Esophagus muscularis mucosa (tissue), 4 donors: ENCODE measurements at regions of chr1 and their contacts with region 1.

Region 1: GRCh38 chr1:160251687-160252526 is 10.4 kb downstream of the DCAF8 start:
- DNase-seq: no peak
- H3K4me3 ChIP-seq: no peak overlapping the region
- H3K27ac ChIP-seq: peak overlapping the region; percentile 36 to 57 (median 42)
- H3K4me1 ChIP-seq: peaks cover 29 to 59% (median 51%) of the 10 kb centered on the region in 4 donors
- H3K27me3 ChIP-seq: no peaks in the 10 kb centered on the region
- CTCF ChIP-seq: peak; percentile 70 to 83 (median 70)
- EP300 ChIP-seq: no peak
- POLR2A ChIP-seq: no peak

Region 2: DNA sequence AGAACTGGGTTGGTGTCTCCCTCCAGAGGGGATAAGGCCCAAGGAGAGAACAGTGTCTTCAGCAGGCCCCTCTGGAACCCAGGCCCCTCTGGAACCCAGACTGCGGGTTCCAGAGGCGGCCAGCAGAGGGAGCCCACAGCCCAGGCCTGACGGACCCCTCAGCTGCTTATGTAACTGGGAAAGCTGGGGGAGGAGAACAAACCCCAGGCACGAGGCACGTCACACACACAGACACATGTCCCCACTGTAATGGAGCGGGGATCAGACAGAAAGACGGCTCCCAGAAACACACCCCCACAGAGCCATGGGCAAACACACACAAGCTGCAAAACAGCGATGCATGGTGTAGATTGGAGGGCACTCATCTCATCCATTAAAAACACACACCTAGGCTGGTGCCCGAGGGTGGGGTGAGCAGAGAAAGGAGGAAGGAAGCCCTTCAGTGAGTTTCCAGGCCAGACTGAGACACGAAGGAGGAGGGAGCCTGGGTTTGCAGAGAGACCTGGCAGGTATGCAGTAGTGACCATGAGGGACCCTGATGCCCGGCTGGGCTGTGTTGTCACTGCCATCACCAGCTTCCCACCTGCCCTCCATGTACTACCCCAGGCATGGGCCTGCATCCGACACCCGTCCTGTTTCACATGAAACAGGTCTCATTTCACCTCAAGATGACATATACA is 150.7 kb before region 1 on chr1:
- intact Hi-C with region 1: loop called (anchors 2 kb)
- DNase-seq: no peak
- H3K4me3 ChIP-seq: peak overlapping the region in 1 of 4 donors; percentile 9
- H3K27ac ChIP-seq: peak overlapping the region; percentile 94 to 98 (median 96)
- H3K4me1 ChIP-seq: peaks cover 52 to 76% (median 71%) of the 10 kb centered on the region in 4 donors
- H3K27me3 ChIP-seq: no peaks in the 10 kb centered on the region
- CTCF ChIP-seq: peak in 2 of 3 experiments; percentile 97 to 100
- EP300 ChIP-seq: no peak
- POLR2A ChIP-seq: no peak

Region 3: DNA sequence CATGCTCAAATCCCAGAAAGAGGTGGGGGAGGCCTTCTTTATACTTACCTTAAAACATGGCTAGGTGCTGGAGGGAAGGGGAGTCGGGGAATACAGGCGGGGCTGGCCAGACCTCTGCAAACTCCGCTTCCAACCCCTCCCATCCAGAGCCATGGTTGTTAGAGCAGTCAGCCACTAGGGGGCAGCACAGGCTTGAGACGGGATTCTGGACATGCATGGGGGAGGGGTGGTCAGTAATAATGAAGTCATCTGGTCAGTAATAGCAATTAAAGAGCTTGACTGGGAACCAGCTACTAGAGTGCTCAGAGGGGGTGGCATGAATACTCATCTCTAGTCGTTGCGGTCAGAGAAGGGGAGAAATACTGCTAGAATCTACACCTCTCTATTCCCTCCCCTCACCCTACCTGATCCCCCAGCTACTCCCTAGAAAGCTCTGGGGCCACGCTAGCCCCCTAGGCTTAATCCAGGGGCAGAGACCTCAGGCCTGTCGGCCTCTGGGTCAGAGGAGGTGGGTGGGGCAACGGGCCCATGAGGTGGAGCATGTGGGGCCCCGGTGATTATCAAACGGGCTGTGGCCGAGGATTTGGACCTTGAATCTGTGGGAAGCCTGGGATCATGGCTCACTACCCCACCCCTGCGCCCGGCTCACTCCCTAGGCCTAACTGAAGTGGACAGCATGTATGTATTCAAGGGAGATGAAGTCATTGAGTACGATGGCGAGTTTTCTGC is 58.7 kb before region 1 on chr1:
- intact Hi-C with region 1: loop called (anchors 2 kb)
- DNase-seq: peak; percentile 96
- H3K4me3 ChIP-seq: peak overlapping the region in 2 of 4 donors; percentile 15 to 36
- H3K27ac ChIP-seq: peak overlapping the region in 3 of 4 donors; percentile 21 to 49 (median 45)
- H3K4me1 ChIP-seq: peaks cover 30 to 48% (median 43%) of the 10 kb centered on the region in 4 donors
- H3K27me3 ChIP-seq: no peaks in the 10 kb centered on the region
- CTCF ChIP-seq: peak; percentile 95 to 98 (median 97)
- EP300 ChIP-seq: no peak
- POLR2A ChIP-seq: no peak

Region 4: GRCh38 chr1:160205242-160206035 is 46.5 kb before region 1 on chr1 and contains the start of gene PEA15:
- intact Hi-C with region 1: loop called (anchors 5 kb)
- DNase-seq: no peak
- H3K4me3 ChIP-seq: peak within 1 kb of the TSS; percentile 66 to 98 (median 84)
- H3K27ac ChIP-seq: peak within 1 kb of the TSS; percentile 89 to 96 (median 91)
- H3K4me1 ChIP-seq: peaks cover 49 to 55% (median 53%) of the 10 kb centered on the region in 4 donors
- H3K27me3 ChIP-seq: no peaks in the 10 kb centered on the region
- CTCF ChIP-seq: no peak
- EP300 ChIP-seq: no peak
- POLR2A ChIP-seq: peak; percentile 81
- total RNA-seq, gene PEA15: 161 to 286 (median 239) TPM

Region 5: DNA sequence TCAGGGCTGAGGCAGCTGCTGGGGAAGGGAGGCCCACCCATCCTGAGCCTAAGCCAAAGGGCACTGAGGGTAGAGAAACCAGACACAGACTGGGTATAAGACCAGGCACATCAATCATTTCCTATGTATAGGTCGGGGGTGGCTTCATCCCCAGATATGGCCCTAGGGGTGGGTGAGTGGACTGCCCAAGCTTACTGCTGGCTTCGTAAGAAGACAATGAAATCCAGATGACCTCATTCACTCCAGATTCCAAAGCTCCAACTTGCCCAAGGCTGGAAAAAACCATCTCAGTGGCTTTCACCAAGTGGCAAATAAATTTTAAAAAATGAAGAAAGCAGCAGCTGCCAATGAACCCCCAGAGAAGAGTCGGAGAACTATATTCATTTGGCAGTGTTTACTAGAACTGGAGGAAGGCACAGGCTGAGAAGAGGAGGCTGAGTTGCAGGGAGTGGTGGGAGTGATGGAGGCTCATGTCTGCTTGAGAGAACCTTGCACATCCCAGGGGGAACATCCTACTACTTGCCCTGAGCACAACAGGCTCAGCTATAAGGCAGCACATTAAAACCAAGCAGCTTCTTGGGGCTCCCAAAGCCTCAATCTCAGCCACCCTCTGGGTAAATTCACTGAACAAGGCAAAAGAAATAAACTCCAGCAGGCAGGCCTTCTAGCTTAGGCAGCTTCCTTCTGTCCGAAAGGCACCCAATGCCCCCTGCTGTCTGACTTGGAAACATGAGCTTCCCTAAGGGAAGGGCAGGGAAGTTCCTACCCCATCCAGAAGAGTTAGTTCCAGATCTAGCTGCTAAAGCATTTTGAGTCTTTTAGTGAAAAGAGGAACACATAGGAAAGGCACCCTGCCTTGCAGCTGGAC is 32.6 kb before region 1 on chr1:
- intact Hi-C with region 1: loop called (anchors 5 kb)
- DNase-seq: no peak
- H3K4me3 ChIP-seq: no peak overlapping the region
- H3K27ac ChIP-seq: peak overlapping the region; percentile 60 to 79 (median 76)
- H3K4me1 ChIP-seq: peaks cover 35 to 54% (median 45%) of the 10 kb centered on the region in 4 donors
- H3K27me3 ChIP-seq: no peaks in the 10 kb centered on the region
- CTCF ChIP-seq: peak; percentile 64 to 76 (median 74)
- EP300 ChIP-seq: no peak
- POLR2A ChIP-seq: no peak

Region 6: GRCh38 chr1:160284782-160285344 is 33.0 kb after region 1 on chr1 and contains the start of gene PEX19:
- intact Hi-C with region 1: loop called (anchors 5 kb)
- DNase-seq: peak; percentile 97
- H3K4me3 ChIP-seq: peak within 1 kb of the TSS; percentile 68 to 94 (median 76)
- H3K27ac ChIP-seq: peak within 1 kb of the TSS; percentile 73 to 87 (median 85)
- H3K4me1 ChIP-seq: peaks cover 17 to 34% (median 24%) of the 10 kb centered on the region in 4 donors
- H3K27me3 ChIP-seq: no peaks in the 10 kb centered on the region
- CTCF ChIP-seq: peak in 1 of 3 experiments; percentile 15
- EP300 ChIP-seq: no peak
- POLR2A ChIP-seq: peak; percentile 54
- total RNA-seq, gene PEX19: 43.6 to 54.2 (median 46.1) TPM